IMR-90 (cell line): ENCODE measurements at regions of chr5 and their contacts with region 1.

Region 1: DNA sequence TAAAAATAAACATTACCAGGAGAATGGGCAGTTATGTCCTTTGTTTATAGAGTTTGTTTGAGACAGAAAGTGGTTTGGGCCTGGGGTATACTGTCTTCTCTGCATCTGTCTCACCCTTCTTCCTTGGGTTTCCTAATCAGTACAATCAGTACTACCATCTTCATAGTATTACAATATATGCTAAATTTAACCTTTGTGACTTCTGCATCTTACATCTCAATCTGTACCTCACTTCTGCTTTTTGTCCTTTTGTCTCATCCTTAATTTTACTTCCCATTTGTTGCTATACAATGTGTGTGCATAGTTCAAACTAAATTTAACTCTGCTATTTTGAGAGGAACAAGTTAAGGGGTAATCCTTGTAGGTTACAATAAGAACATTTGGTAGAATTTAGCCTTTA is 19.6 kb downstream of the FBXO38 start:
- DNase-seq: no peak
- ATAC-seq: no peak
- H3K4me3 ChIP-seq: no peak overlapping the region
- H3K27ac ChIP-seq: no peak overlapping the region
- H3K4me1 ChIP-seq: peaks cover 8% of the 10 kb centered on the region
- H3K27me3 ChIP-seq: no peaks in the 10 kb centered on the region
- CTCF ChIP-seq: no peak
- POLR2A ChIP-seq: no peak
- RAD21 ChIP-seq: no peak

Region 2: GRCh38 chr5:146466521-146467349 is 1936.6 kb before region 1 on chr5:
- CTCF ChIA-PET with region 1: no interaction called
- POLR2A ChIA-PET with region 1: no interaction called
- dilution Hi-C with region 1: no loop called
- in situ Hi-C with region 1: loop called (anchors 25 kb)
- intact Hi-C with region 1: no loop called
- DNase-seq: peak; percentile 37
- ATAC-seq: peak; percentile 83
- H3K4me3 ChIP-seq: no peak overlapping the region
- H3K27ac ChIP-seq: no peak overlapping the region
- H3K4me1 ChIP-seq: no peaks in the 10 kb centered on the region
- H3K27me3 ChIP-seq: no peaks in the 10 kb centered on the region
- CTCF ChIP-seq: peak; percentile 58
- POLR2A ChIP-seq: no peak
- RAD21 ChIP-seq: no peak

Region 3: GRCh38 chr5:148209151-148209770 is 194.1 kb before region 1 on chr5:
- CTCF ChIA-PET with region 1: no interaction called
- POLR2A ChIA-PET with region 1: no interaction called
- dilution Hi-C with region 1: no loop called
- in situ Hi-C with region 1: no loop called
- intact Hi-C with region 1: no loop called
- DNase-seq: no peak
- ATAC-seq: no peak
- H3K4me3 ChIP-seq: no peak overlapping the region
- H3K27ac ChIP-seq: no peak overlapping the region
- H3K4me1 ChIP-seq: no peaks in the 10 kb centered on the region
- H3K27me3 ChIP-seq: no peaks in the 10 kb centered on the region
- CTCF ChIP-seq: no peak
- POLR2A ChIP-seq: no peak
- RAD21 ChIP-seq: no peak

Region 4: GRCh38 chr5:148416921-148417320 is 13.6 kb after region 1 on chr5:
- CTCF ChIA-PET with region 1: interaction called, 10 read pairs
- POLR2A ChIA-PET with region 1: interaction called, 3 read pairs
- dilution Hi-C with region 1: no loop called
- in situ Hi-C with region 1: no loop called
- intact Hi-C with region 1: no loop called
- DNase-seq: no peak
- ATAC-seq: no peak
- H3K4me3 ChIP-seq: no peak overlapping the region
- H3K27ac ChIP-seq: no peak overlapping the region
- H3K4me1 ChIP-seq: no peaks in the 10 kb centered on the region
- H3K27me3 ChIP-seq: no peaks in the 10 kb centered on the region
- CTCF ChIP-seq: no peak
- POLR2A ChIP-seq: no peak
- RAD21 ChIP-seq: no peak

Region 5: GRCh38 chr5:148768806-148769415 is 365.6 kb after region 1 on chr5:
- CTCF ChIA-PET with region 1: no interaction called
- POLR2A ChIA-PET with region 1: no interaction called
- dilution Hi-C with region 1: no loop called
- in situ Hi-C with region 1: no loop called
- intact Hi-C with region 1: no loop called
- DNase-seq: no peak
- ATAC-seq: no peak
- H3K4me3 ChIP-seq: no peak overlapping the region
- H3K27ac ChIP-seq: no peak overlapping the region
- H3K4me1 ChIP-seq: no peaks in the 10 kb centered on the region
- H3K27me3 ChIP-seq: peaks cover 10% of the 10 kb centered on the region
- CTCF ChIP-seq: no peak
- POLR2A ChIP-seq: no peak
- RAD21 ChIP-seq: no peak